Activated B cell treated with CpG ODN at 0.5 μM for 24 hours (primary cell): ENCODE measurements at regions of chr4 and their contacts with region 1.

Region 1: DNA sequence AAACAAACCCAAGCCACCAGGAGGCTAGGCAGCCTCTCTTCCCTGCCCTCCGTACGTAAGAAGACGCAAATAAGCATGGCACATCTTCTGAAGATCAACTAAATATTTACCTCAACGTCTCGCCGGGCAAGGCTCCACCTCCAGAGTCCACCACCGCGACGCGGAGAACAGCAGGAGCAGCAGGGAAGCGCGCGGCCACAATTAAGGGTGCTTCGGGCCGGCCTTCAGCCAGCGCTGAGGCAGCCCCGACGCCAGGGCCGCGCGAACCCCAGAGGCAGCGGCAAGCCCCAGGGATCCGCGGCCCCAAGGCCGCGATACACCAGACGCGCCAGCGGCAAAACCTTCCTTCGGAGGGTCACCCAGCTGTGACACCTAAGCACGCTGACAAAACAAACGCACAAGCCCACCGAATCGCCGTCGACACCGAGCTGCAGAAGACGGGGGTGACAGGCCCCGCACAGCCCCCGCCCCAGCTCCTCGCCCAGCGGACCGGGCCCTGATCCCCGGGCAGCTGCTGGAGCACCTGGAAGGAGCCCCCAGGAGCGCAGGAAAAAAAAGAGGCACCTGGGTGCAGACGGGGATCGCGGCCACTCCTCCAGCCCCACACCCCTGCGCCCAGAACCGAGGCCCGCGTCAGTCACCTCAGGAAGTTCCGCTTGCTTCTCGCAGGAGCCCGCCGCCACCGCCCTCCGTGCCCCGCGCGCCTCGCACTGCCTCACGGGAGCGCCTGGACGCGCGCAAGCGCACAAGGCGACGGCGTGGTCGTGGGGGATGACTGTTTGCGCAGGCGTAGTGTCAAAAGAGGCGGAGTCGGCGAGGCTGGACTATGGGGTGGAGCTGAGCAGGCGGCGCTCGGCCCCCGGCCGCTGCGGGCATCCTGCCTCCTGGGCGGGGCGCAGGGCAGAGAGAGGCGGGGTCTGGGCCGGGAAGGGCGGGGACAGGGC is at the starts of genes HAUS3 and POLN:
- DNase-seq: peak; percentile 99
- ATAC-seq: peak; percentile 96
- H3K4me3 Mint-ChIP-seq: peak within 1 kb of the TSS; percentile 91
- H3K27ac Mint-ChIP-seq: peak within 1 kb of the TSS; percentile 86
- H3K4me1 Mint-ChIP-seq: peaks cover 54% of the 10 kb centered on the region
- H3K27me3 Mint-ChIP-seq: no peaks in the 10 kb centered on the region
- CTCF ChIP-seq: no peak
- total RNA-seq, gene HAUS3: 17.9 and 19.0 TPM in 2 replicates
- total RNA-seq, gene POLN: 1.4 and 1.7 TPM in 2 replicates

Region 2: GRCh38 chr4:2008875-2009703 is 232.6 kb before region 1 on chr4 and contains the start of gene NELFA:
- CTCF ChIA-PET with region 1: no interaction called
- POLR2A ChIA-PET with region 1: no interaction called
- intact Hi-C with region 1: loop called (anchors 10 kb)
- DNase-seq: peak; percentile 93
- ATAC-seq: peak; percentile 80
- H3K4me3 Mint-ChIP-seq: peak within 1 kb of the TSS; percentile 90
- H3K27ac Mint-ChIP-seq: peak within 1 kb of the TSS; percentile 91
- H3K4me1 Mint-ChIP-seq: peaks cover 32% of the 10 kb centered on the region
- H3K27me3 Mint-ChIP-seq: peaks cover 4% of the 10 kb centered on the region
- CTCF ChIP-seq: no peak
- total RNA-seq, gene NELFA: 44.7 and 49.9 TPM in 2 replicates

Region 3: GRCh38 chr4:2281575-2282343 is 40.1 kb after region 1 on chr4:
- CTCF ChIA-PET with region 1: interaction called, 3 read pairs
- POLR2A ChIA-PET with region 1: interaction called, 5 read pairs
- intact Hi-C with region 1: loop called (anchors 1 kb)
- DNase-seq: peak; percentile 57
- ATAC-seq: peak; percentile 93
- H3K4me3 Mint-ChIP-seq: peak overlapping the region; percentile 70
- H3K27ac Mint-ChIP-seq: peak overlapping the region; percentile 97
- H3K4me1 Mint-ChIP-seq: peaks cover 35% of the 10 kb centered on the region
- H3K27me3 Mint-ChIP-seq: no peaks in the 10 kb centered on the region
- CTCF ChIP-seq: no peak

Region 4: GRCh38 chr4:2354118-2354517 is 112.4 kb after region 1 on chr4:
- CTCF ChIA-PET with region 1: no interaction called
- POLR2A ChIA-PET with region 1: no interaction called
- intact Hi-C with region 1: loop called (anchors 1 kb)
- DNase-seq: no peak
- ATAC-seq: peak; percentile 35
- H3K4me3 Mint-ChIP-seq: no peak overlapping the region
- H3K27ac Mint-ChIP-seq: peak overlapping the region; percentile 56
- H3K4me1 Mint-ChIP-seq: peaks cover 12% of the 10 kb centered on the region
- H3K27me3 Mint-ChIP-seq: no peaks in the 10 kb centered on the region
- CTCF ChIP-seq: no peak

Region 5: DNA sequence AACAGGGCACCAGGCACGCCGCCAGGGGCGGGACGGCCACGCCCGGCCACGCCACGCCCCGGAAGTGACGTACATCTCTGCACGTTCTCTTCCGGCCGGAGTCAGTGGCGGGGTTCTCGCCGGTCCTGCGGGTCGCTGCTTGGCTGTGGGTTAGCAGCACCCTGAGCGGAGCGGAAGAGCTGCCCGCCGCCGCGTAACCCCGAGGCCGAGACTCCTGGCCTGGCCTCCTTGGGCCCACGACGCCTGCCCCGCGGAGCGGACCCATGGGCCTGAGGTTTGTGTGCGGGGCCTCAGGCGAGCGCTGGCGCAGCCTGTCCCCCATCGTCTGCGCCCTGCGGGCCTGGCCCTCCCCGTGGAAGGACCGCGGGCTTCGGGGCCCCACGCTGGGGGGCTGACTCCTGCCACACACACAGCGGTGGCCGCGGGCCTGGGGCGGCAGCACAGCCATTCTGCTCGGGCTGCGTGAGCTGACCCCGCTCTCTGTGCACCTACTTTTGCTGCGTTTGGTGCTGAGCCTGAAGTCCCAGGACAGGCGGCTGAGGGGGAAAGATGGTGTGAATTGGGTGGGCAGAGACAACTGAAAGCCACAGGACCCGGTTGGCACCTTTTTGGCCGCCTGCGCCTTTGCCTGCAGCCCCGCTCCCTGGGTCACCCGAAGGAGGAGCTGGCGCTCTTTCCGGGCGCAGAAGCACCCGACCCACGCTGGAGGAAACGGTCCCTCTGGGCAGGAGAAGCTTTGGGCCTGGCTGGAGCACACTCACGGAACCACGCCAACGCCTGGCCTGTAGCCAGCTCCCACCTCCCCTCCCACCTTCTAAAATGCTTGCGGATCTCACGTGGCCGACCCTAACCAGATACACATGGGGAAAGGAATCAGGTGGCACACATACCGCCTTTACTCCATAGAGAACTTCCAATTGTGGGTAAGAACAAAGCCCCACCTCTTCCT is 693.4 kb after region 1 on chr4:
- CTCF ChIA-PET with region 1: no interaction called
- POLR2A ChIA-PET with region 1: no interaction called
- intact Hi-C with region 1: loop called (anchors 10 kb)
- DNase-seq: peak; percentile 99
- ATAC-seq: peak; percentile 46
- H3K4me3 Mint-ChIP-seq: peak overlapping the region; percentile 83
- H3K27ac Mint-ChIP-seq: peak overlapping the region; percentile 59
- H3K4me1 Mint-ChIP-seq: peaks cover 66% of the 10 kb centered on the region
- H3K27me3 Mint-ChIP-seq: no peaks in the 10 kb centered on the region
- CTCF ChIP-seq: no peak